PC-3 (cell line): ENCODE measurements at regions of chr5 and their contacts with region 1.

Region 1: GRCh38 chr5:61331407-61332357 is at the start of gene ZSWIM6:
- DNase-seq: peak; percentile 93
- ATAC-seq: peak; percentile 60
- H3K4me3 ChIP-seq: peak within 1 kb of the TSS; percentile 95
- H3K27ac ChIP-seq: peak within 1 kb of the TSS; percentile 63
- H3K4me1 ChIP-seq: peaks cover 39% of the 10 kb centered on the region
- H3K27me3 ChIP-seq: no peaks in the 10 kb centered on the region
- CTCF ChIP-seq: no peak
- total RNA-seq, gene ZSWIM6: 3.4 and 4.3 TPM in 2 replicates

Region 2: DNA sequence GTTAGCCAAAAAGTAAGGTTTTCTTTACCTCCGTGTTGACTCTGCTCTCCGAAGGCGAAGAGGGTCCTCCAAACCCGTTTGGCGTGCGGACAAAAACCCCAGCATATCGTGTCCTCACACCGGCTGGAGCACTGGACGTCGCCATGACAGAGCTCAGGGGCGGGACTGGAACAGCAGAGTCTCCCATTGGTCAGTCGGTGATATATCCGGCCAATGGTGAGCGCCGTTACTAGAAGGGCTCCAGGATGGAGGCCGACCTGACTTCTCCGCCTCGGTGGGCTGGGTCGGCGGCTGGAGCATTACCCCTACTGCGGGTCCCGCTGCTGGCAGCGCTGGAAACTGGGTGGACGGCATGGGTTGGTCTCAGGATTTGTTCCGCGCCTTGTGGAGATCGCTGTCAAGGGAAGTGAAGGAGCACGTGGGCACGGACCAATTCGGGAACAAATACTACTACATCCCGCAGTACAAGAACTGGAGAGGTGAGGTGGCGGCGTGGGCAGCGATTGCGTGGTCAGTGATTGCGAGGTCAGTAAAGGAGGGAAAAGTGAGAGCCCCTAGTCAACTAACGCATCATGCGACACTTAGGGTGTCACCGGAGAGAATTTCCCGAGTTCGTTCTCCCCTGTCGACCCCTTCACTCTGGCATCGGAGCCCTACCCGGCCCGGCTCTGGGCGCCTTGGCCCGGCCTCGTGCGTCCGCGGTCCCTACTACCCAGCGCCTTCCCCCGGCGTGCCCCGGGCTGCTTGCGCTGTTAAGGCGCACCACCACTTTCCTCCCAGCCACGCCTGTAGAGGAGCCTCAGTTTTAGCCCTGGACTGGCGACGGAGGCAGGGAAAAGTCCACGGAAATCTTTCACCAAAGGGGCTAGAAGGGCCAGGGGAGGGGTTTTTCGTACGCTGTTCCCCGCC is 386.5 kb before region 1 on chr5 and contains the starts of genes ERCC8 and NDUFAF2:
- CTCF ChIA-PET with region 1: no interaction called
- POLR2A ChIA-PET with region 1: interaction called, 7 read pairs
- intact Hi-C with region 1: loop called (anchors 2 kb)
- DNase-seq: peak; percentile 79
- ATAC-seq: peak; percentile 94
- H3K4me3 ChIP-seq: peak within 1 kb of the TSS; percentile 78
- H3K27ac ChIP-seq: peak within 1 kb of the TSS; percentile 45
- H3K4me1 ChIP-seq: peaks cover 12% of the 10 kb centered on the region; the same call in 1 of the 2 replicates
- H3K27me3 ChIP-seq: no peaks in the 10 kb centered on the region
- CTCF ChIP-seq: no peak
- total RNA-seq, gene ERCC8: 2.1 and 2.6 TPM in 2 replicates
- total RNA-seq, gene NDUFAF2: 39.3 and 41.9 TPM in 2 replicates

Region 3: DNA sequence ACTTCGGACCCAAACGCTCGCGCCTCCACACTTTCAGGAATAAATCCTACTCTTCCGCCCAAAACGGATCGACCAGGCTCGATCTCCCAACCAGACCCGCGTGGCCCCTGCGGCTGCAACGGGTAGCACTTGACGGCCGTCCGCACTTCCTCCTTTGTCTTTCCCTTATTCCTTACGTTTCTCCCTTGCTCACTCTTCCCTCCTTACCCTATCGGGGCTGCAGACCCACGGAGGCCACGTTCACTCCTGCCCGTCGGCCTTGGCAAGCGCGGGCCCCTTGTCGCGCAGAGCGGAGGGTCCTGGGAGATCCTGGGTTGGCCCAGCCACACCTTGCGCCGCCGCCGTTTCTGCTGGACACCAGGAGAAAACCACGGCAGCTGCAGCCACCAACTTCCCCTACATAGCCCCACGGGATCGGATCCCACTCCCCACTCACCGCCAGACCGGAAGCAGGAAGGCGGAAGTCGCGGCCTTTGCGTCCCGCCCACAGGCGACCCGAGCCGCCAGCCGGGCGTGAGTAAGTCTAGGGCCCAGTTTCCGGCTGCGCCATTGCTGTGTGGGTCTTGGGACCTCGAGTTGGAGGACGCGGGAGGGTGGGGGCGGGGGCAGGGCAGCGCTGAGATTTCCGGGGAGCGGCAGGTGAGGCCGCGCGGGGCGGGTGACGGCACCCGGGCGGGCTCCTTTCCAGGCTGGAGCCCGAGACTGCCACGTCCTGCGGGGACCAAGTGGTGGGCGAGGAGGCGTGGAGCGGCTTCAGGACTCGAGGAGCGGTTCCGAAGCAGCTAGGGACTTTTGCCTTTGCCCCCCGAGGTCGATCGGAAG is 169.5 kb before region 1 on chr5 and contains the start of gene SMIM15:
- CTCF ChIA-PET with region 1: interaction called, 10 read pairs
- POLR2A ChIA-PET with region 1: interaction called, 3 read pairs
- intact Hi-C with region 1: loop called (anchors 2 kb)
- DNase-seq: peak; percentile 83
- ATAC-seq: peak; percentile 92
- H3K4me3 ChIP-seq: peak within 1 kb of the TSS; percentile 98
- H3K27ac ChIP-seq: peak within 1 kb of the TSS; percentile 88
- H3K4me1 ChIP-seq: peaks cover 31% of the 10 kb centered on the region
- H3K27me3 ChIP-seq: no peaks in the 10 kb centered on the region
- CTCF ChIP-seq: no peak
- total RNA-seq, gene SMIM15: 61.7 and 76.3 TPM in 2 replicates

Region 4: GRCh38 chr5:61408476-61409168 is 76.9 kb after region 1 on chr5:
- CTCF ChIA-PET with region 1: interaction called, 3 read pairs
- POLR2A ChIA-PET with region 1: interaction called, 3 read pairs
- intact Hi-C with region 1: loop called (anchors 2 kb)
- DNase-seq: peak; percentile 97
- ATAC-seq: peak; percentile 96
- H3K4me3 ChIP-seq: peak overlapping the region; percentile 57
- H3K27ac ChIP-seq: peak overlapping the region; percentile 97
- H3K4me1 ChIP-seq: peaks cover 23% of the 10 kb centered on the region
- H3K27me3 ChIP-seq: no peaks in the 10 kb centered on the region
- CTCF ChIP-seq: no peak

Region 5: DNA sequence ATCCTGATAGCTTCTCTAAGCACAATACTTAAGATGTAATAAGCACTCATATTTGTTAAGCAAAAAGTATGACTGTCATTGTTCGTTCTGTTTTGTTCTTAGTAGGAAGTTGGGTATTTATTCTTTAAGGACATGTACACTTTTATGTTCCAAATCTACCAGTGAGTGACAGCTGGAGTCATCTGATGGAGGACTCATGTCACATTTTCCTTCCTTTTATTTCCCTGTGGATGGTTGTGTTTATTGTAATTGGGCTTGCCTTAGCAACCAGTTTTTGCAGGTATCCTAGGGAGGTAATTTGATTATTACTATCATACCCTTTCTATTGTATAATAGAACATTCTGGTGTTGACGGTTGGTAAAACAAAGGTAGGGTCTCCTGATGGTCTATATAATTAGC is 146.1 kb after region 1 on chr5:
- CTCF ChIA-PET with region 1: no interaction called
- POLR2A ChIA-PET with region 1: no interaction called
- intact Hi-C with region 1: no loop called
- DNase-seq: no peak
- ATAC-seq: no peak
- H3K4me3 ChIP-seq: no peak overlapping the region
- H3K27ac ChIP-seq: no peak overlapping the region
- H3K4me1 ChIP-seq: peaks cover 6% of the 10 kb centered on the region; the same call in 1 of the 2 replicates
- H3K27me3 ChIP-seq: no peaks in the 10 kb centered on the region
- CTCF ChIP-seq: no peak

Region 6: GRCh38 chr5:61538722-61539501 is 207.2 kb after region 1 on chr5:
- CTCF ChIA-PET with region 1: no interaction called
- POLR2A ChIA-PET with region 1: no interaction called
- intact Hi-C with region 1: loop called (anchors 2 kb)
- DNase-seq: peak; percentile 70
- ATAC-seq: peak; percentile 90
- H3K4me3 ChIP-seq: no peak overlapping the region
- H3K27ac ChIP-seq: peak overlapping the region; percentile 73
- H3K4me1 ChIP-seq: peaks cover 31% of the 10 kb centered on the region
- H3K27me3 ChIP-seq: no peaks in the 10 kb centered on the region
- CTCF ChIP-seq: no peak

Region 7: GRCh38 chr5:61817472-61818326 is 486.0 kb after region 1 on chr5:
- CTCF ChIA-PET with region 1: no interaction called
- POLR2A ChIA-PET with region 1: no interaction called
- intact Hi-C with region 1: loop called (anchors 2 kb)
- DNase-seq: peak; percentile 45
- ATAC-seq: peak; percentile 72
- H3K4me3 ChIP-seq: no peak overlapping the region
- H3K27ac ChIP-seq: no peak overlapping the region
- H3K4me1 ChIP-seq: peaks cover 28% of the 10 kb centered on the region
- H3K27me3 ChIP-seq: no peaks in the 10 kb centered on the region
- CTCF ChIP-seq: peak; percentile 64